ENCODE measurements at regions of chr11 and their contacts with region 1.

Region 1: DNA sequence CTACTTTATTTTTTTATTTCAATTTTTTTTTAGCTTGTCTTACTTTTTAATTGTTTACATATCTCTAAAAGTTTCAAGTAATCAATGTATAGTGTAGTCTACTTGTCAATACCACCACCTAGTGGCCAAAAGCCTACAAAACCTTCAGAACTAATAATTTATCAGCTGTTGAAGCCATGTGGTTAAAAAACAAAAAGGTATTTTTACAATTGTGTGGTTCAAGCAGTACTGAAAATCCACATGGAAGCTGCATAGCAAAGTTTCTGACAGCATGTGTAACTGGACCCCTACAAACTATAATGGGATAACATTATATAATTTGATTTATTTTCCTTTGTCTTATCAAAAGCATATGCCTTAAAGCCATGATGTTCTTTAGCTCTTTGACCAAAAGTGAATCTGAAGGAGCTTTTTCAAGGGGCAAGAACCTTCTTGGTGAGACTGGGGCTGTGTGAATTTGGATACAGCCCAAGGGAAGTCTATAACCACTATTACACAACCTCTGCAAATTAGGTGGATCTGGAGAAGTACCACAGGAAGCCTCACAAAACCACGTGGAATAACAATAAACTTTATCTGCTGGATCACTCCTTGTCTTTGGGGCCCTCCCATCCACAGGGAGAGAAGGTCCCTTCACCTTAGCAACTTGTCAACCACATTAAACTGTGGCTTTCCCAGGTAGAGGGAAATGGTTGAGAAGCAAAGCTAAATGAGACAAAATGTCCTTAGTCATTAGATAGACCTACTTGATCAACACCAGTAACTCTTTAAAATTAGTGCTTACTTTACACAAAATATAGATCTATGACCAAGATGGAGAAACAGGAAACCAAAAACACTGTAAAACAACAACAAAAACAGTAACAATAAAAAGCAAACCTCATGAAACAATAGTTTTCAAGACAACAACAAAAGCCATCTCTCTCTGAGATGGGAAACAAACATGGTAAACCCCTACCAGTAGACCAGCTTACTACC is 9.9 kb downstream of the NARS2 start:
- DNase-seq: peak; percentile 76
- ATAC-seq: peak; percentile 77
- H3K4me3 Mint-ChIP-seq: no peak overlapping the region
- H3K27ac Mint-ChIP-seq: peak overlapping the region; percentile 73
- H3K4me1 Mint-ChIP-seq: peaks cover 42% of the 10 kb centered on the region
- H3K27me3 Mint-ChIP-seq: no peaks in the 10 kb centered on the region

Region 2: GRCh38 chr11:78149646-78150045 is 415.1 kb before region 1 on chr11:
- CTCF ChIA-PET with region 1: interaction called, 12 read pairs
- POLR2A ChIA-PET with region 1: no interaction called
- DNase-seq: no peak
- ATAC-seq: no peak
- H3K4me3 Mint-ChIP-seq: no peak overlapping the region
- H3K27ac Mint-ChIP-seq: no peak overlapping the region
- H3K4me1 Mint-ChIP-seq: no peaks in the 10 kb centered on the region
- H3K27me3 Mint-ChIP-seq: no peaks in the 10 kb centered on the region

Region 3: GRCh38 chr11:78228467-78228866 is 336.3 kb before region 1 on chr11:
- CTCF ChIA-PET with region 1: interaction called, 38 read pairs
- POLR2A ChIA-PET with region 1: no interaction called
- DNase-seq: peak; percentile 57
- ATAC-seq: no peak
- H3K4me3 Mint-ChIP-seq: no peak overlapping the region
- H3K27ac Mint-ChIP-seq: peak overlapping the region; percentile 8
- H3K4me1 Mint-ChIP-seq: peaks cover 49% of the 10 kb centered on the region
- H3K27me3 Mint-ChIP-seq: no peaks in the 10 kb centered on the region

Region 4: GRCh38 chr11:78424334-78425270 is 140.2 kb before region 1 on chr11:
- CTCF ChIA-PET with region 1: interaction called, 136 read pairs
- POLR2A ChIA-PET with region 1: no interaction called
- DNase-seq: no peak
- ATAC-seq: peak; percentile 37
- H3K4me3 Mint-ChIP-seq: no peak overlapping the region
- H3K27ac Mint-ChIP-seq: peak overlapping the region; percentile 73
- H3K4me1 Mint-ChIP-seq: peaks cover 46% of the 10 kb centered on the region
- H3K27me3 Mint-ChIP-seq: peaks cover 2% of the 10 kb centered on the region

Region 5: GRCh38 chr11:78453140-78453935 is 111.4 kb before region 1 on chr11:
- CTCF ChIA-PET with region 1: interaction called, 10 read pairs
- POLR2A ChIA-PET with region 1: no interaction called
- DNase-seq: no peak
- ATAC-seq: peak; percentile 51
- H3K4me3 Mint-ChIP-seq: no peak overlapping the region
- H3K27ac Mint-ChIP-seq: peak overlapping the region; percentile 31
- H3K4me1 Mint-ChIP-seq: peaks cover 24% of the 10 kb centered on the region
- H3K27me3 Mint-ChIP-seq: no peaks in the 10 kb centered on the region

Region 6: GRCh38 chr11:78586452-78587046 is 21.8 kb after region 1 on chr11:
- CTCF ChIA-PET with region 1: interaction called, 11 read pairs
- POLR2A ChIA-PET with region 1: no interaction called
- DNase-seq: no peak
- ATAC-seq: no peak
- H3K4me3 Mint-ChIP-seq: no peak overlapping the region
- H3K27ac Mint-ChIP-seq: no peak overlapping the region
- H3K4me1 Mint-ChIP-seq: no peaks in the 10 kb centered on the region
- H3K27me3 Mint-ChIP-seq: peaks cover 11% of the 10 kb centered on the region

Region 7: DNA sequence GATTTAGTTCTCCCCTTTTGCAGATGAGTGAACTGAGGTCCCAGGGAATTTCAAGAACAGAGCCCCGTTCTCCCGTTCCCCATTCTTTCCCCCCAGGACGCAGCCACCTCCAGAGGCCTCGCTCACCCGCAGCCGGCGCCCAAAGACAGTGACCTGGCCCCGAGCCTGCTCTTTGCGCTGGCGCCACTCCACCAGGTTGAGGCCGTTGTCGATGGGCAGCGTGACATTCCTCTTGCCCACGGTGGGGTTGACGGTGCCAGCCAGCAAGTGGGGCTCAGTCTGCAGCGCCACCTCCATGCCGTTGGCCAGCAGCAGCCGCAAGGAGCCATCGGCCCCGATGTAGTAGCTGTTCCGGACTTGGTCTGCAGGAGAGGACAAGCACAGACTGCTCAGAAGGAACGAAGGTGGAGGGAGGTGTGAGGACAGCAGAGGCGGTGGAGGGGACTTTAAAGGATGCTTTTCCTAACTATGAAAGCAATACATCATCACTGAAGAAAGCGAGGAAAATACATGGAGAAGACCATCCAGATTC is 111.3 kb after region 1 on chr11:
- CTCF ChIA-PET with region 1: no interaction called
- POLR2A ChIA-PET with region 1: no interaction called
- DNase-seq: no peak
- ATAC-seq: no peak
- H3K4me3 Mint-ChIP-seq: no peak overlapping the region
- H3K27ac Mint-ChIP-seq: no peak overlapping the region
- H3K4me1 Mint-ChIP-seq: no peaks in the 10 kb centered on the region
- H3K27me3 Mint-ChIP-seq: no peaks in the 10 kb centered on the region

Region 8: DNA sequence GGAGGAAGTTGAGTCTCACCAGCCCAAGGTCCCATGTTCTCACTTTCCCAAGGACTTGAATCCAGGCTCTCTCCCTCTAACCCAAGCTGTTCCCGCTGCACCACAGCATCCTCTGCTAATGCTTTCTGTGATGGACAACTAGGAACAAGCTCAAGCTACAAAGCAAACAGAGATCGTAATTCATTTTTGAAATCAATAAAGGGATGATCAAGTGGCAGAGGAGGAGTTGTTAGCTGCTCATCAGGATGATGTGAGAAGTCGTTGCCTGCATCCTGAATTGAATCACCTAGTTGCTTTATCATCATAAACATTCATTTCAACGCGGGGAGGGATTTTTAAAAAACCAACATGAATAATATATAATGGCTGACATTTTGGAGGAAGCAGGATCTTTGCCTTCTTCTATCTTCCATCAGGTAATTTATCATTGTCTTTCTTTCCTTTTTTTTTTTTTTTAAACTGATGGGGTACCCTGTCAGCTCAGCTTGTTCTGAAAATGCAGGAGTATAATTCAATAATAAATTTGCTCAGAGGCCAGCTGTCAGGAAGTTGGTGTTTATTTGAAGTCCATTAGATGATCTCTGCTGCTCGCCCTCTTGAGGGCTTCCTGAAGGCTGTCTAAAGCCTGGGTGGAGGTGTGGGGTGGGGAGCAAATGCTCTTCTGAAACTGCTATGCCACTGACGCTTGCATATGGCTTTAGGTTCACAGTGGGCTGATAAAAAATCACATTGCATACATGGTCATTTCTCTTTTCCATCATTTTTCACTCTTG is 184.3 kb after region 1 on chr11:
- CTCF ChIA-PET with region 1: no interaction called
- POLR2A ChIA-PET with region 1: no interaction called
- DNase-seq: no peak
- ATAC-seq: no peak
- H3K4me3 Mint-ChIP-seq: no peak overlapping the region
- H3K27ac Mint-ChIP-seq: no peak overlapping the region
- H3K4me1 Mint-ChIP-seq: no peaks in the 10 kb centered on the region
- H3K27me3 Mint-ChIP-seq: peaks cover 1% of the 10 kb centered on the region